B cell (primary cell): ENCODE measurements at regions of chr2 and their contacts with region 1.

Region 1: GRCh38 chr2:47639467-47639866 is 143.5 kb upstream of the MSH6 start:
- DNase-seq: no peak
- ATAC-seq: no peak
- H3K4me3 ChIP-seq: no peak overlapping the region
- H3K4me3 Mint-ChIP-seq: no peak overlapping the region
- H3K27ac ChIP-seq: no peak overlapping the region
- H3K27ac Mint-ChIP-seq: no peak overlapping the region
- H3K4me1 ChIP-seq: peaks cover 0 to 4% of the 10 kb centered on the region in 2 donors
- H3K4me1 Mint-ChIP-seq: peaks cover 11% of the 10 kb centered on the region
- H3K27me3 ChIP-seq: no peaks in the 10 kb centered on the region
- H3K27me3 Mint-ChIP-seq: no peaks in the 10 kb centered on the region
- CTCF ChIP-seq: no peak

Region 2: GRCh38 chr2:47471429-47472116 is 167.9 kb before region 1 on chr2:
- CTCF ChIA-PET with region 1: no interaction called
- POLR2A ChIA-PET with region 1: interaction called, 12 read pairs
- intact Hi-C with region 1: no loop called
- DNase-seq: no peak
- ATAC-seq: no peak
- H3K4me3 ChIP-seq: no peak overlapping the region
- H3K4me3 Mint-ChIP-seq: no peak overlapping the region
- H3K27ac ChIP-seq: no peak overlapping the region
- H3K27ac Mint-ChIP-seq: no peak overlapping the region
- H3K4me1 ChIP-seq: no peaks in the 10 kb centered on the region
- H3K4me1 Mint-ChIP-seq: no peaks in the 10 kb centered on the region
- H3K27me3 ChIP-seq: no peaks in the 10 kb centered on the region
- H3K27me3 Mint-ChIP-seq: no peaks in the 10 kb centered on the region
- CTCF ChIP-seq: no peak